Caco-2 (cell line): ENCODE measurements at regions of chr11 and their contacts with region 1.

Region 1: DNA sequence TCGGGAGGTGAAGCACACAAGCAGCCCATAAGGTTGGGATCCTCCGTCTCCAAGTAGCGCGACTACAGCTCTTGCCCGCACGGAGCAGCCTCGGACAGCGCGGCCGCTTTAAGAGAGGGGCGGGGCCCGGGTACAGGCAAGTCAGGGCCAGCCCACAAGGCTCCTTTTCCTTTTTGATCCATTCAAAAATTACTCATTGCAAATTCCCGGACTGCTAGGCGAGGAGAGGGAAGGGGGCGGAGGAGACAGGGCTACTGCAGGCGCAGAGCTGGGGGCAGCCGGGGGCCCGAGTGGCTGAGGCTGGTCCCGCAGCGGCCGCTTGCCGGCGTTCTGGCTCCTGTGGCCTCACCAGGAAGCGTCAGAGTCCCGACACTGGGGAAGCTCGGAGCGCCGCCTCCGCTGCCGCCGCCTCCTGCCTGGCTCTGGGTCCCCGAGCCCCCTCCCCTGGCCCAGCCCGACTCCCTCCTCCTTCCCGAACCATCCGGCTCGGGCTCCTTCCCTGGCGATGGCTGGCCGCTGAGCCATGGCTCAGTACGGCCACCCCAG is at the start of gene UBASH3B:
- DNase-seq: peak; percentile 88
- H3K4me3 ChIP-seq: peak within 1 kb of the TSS; percentile 58
- H3K4me3 Mint-ChIP-seq: peak within 1 kb of the TSS; percentile 95
- H3K27ac Mint-ChIP-seq: peak within 1 kb of the TSS; percentile 65
- H3K4me1 ChIP-seq: peaks cover 13% of the 10 kb centered on the region
- H3K4me1 Mint-ChIP-seq: peaks cover 13% of the 10 kb centered on the region
- H3K27me3 ChIP-seq: no peaks in the 10 kb centered on the region; the same call in 1 of the 2 replicates
- H3K27me3 Mint-ChIP-seq: no peaks in the 10 kb centered on the region
- CTCF ChIP-seq: peak in 1 of 2 experiments; percentile 27
- total RNA-seq, gene UBASH3B: 21.5 and 22.0 TPM in 2 replicates

Region 2: GRCh38 chr11:122572592-122572991 is 83.0 kb before region 1 on chr11:
- CTCF ChIA-PET with region 1: no interaction called
- POLR2A ChIA-PET with region 1: no interaction called
- intact Hi-C with region 1: no loop called
- DNase-seq: no peak
- H3K4me3 ChIP-seq: no peak overlapping the region
- H3K4me3 Mint-ChIP-seq: no peak overlapping the region
- H3K27ac Mint-ChIP-seq: no peak overlapping the region
- H3K4me1 ChIP-seq: no peaks in the 10 kb centered on the region
- H3K4me1 Mint-ChIP-seq: no peaks in the 10 kb centered on the region
- H3K27me3 ChIP-seq: no peaks in the 10 kb centered on the region
- H3K27me3 Mint-ChIP-seq: peaks cover 22% of the 10 kb centered on the region
- CTCF ChIP-seq: no peak

Region 3: GRCh38 chr11:122628810-122629555 is 26.6 kb before region 1 on chr11:
- CTCF ChIA-PET with region 1: interaction called, 26 read pairs
- POLR2A ChIA-PET with region 1: no interaction called
- intact Hi-C with region 1: no loop called
- DNase-seq: peak; percentile 82 to 86
- H3K4me3 ChIP-seq: no peak overlapping the region
- H3K4me3 Mint-ChIP-seq: no peak overlapping the region
- H3K27ac Mint-ChIP-seq: no peak overlapping the region
- H3K4me1 ChIP-seq: no peaks in the 10 kb centered on the region
- H3K4me1 Mint-ChIP-seq: peaks cover 7% of the 10 kb centered on the region
- H3K27me3 ChIP-seq: no peaks in the 10 kb centered on the region
- H3K27me3 Mint-ChIP-seq: peaks cover under 1% of the 10 kb centered on the region
- CTCF ChIP-seq: peak; percentile 92 to 98

Region 4: GRCh38 chr11:122642472-122642922 is 13.1 kb before region 1 on chr11:
- CTCF ChIA-PET with region 1: interaction called, 5 read pairs
- POLR2A ChIA-PET with region 1: no interaction called
- intact Hi-C with region 1: loop called (anchors 1 kb)
- DNase-seq: peak; percentile 66 to 69
- H3K4me3 ChIP-seq: no peak overlapping the region
- H3K4me3 Mint-ChIP-seq: peak overlapping the region; percentile 19
- H3K27ac Mint-ChIP-seq: peak overlapping the region; percentile 69
- H3K4me1 ChIP-seq: peaks cover 20% of the 10 kb centered on the region
- H3K4me1 Mint-ChIP-seq: peaks cover 12% of the 10 kb centered on the region
- H3K27me3 ChIP-seq: no peaks in the 10 kb centered on the region
- H3K27me3 Mint-ChIP-seq: no peaks in the 10 kb centered on the region
- CTCF ChIP-seq: no peak

Region 5: DNA sequence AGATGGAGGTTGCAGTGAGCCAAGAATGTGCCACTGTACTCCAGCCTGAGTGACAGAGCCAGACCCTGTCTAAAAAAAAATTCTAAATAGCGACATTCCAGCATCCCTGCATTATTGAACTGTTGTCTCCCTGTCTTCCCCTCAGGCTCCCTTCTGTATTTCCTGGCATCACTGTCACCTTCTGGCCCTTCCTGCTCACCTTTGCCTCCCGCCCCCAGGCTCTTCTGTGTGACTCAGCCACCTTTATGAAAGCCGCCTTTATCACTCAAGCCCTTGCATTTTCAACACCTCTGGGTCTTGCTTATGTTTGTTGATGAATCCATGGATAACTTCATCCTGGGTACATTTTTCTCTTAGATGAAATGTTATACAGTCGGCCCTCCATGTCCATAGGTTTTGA is 21.0 kb after region 1 on chr11:
- CTCF ChIA-PET with region 1: no interaction called
- POLR2A ChIA-PET with region 1: no interaction called
- intact Hi-C with region 1: loop called (anchors 1 kb)
- DNase-seq: peak; percentile 78 to 89
- H3K4me3 ChIP-seq: no peak overlapping the region
- H3K4me3 Mint-ChIP-seq: no peak overlapping the region
- H3K27ac Mint-ChIP-seq: peak overlapping the region; percentile 17
- H3K4me1 ChIP-seq: peaks cover 24% of the 10 kb centered on the region
- H3K4me1 Mint-ChIP-seq: peaks cover 18% of the 10 kb centered on the region
- H3K27me3 ChIP-seq: no peaks in the 10 kb centered on the region
- H3K27me3 Mint-ChIP-seq: no peaks in the 10 kb centered on the region
- CTCF ChIP-seq: no peak

Region 6: DNA sequence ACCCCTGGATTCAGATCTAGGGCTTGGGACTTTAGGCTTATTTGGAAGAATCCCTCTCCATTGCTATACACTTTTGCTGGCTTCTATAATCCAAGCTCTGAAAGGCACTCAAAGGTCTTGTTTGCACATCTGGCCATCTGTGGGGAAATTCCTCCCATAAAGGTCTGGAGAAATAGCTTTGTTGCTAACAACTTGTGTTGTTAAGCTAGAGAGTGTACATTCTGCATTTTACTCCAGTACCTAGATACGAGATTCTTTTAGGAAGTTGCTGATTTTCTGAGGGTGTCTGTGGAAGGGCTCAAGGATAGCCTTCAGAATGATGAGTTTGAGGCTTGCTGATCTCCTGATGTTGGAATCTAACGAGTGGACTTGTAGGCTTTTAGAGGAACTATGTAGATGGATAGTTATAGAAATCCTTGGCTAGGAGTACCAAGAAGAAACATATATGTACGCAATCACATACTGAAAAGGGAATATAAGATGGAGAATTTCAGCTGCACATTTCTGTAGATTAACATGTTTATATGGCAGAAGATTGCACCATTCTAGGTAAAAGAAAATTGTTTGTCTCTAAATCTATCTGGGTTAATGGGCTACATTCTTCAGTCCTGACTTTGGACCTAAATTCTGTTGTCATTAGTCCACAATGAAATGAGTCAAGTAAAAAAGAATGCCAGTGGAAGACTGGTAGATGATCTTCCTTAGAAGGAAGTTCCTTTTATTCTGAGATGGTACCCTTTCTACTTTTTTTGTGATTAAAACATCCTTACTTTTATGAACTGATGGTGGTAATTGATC is 50.9 kb after region 1 on chr11:
- CTCF ChIA-PET with region 1: interaction called, 5 read pairs
- POLR2A ChIA-PET with region 1: interaction called, 9 read pairs
- intact Hi-C with region 1: loop called (anchors 1 kb)
- DNase-seq: peak; percentile 57 to 73
- H3K4me3 ChIP-seq: no peak overlapping the region
- H3K4me3 Mint-ChIP-seq: peak overlapping the region; percentile 7
- H3K27ac Mint-ChIP-seq: peak overlapping the region; percentile 81
- H3K4me1 ChIP-seq: peaks cover 35% of the 10 kb centered on the region
- H3K4me1 Mint-ChIP-seq: peaks cover 35% of the 10 kb centered on the region
- H3K27me3 ChIP-seq: no peaks in the 10 kb centered on the region
- H3K27me3 Mint-ChIP-seq: no peaks in the 10 kb centered on the region
- CTCF ChIP-seq: no peak

Region 7: GRCh38 chr11:122721964-122722266 is 66.3 kb after region 1 on chr11:
- CTCF ChIA-PET with region 1: no interaction called
- POLR2A ChIA-PET with region 1: no interaction called
- intact Hi-C with region 1: no loop called
- DNase-seq: no peak
- H3K4me3 ChIP-seq: no peak overlapping the region
- H3K4me3 Mint-ChIP-seq: no peak overlapping the region
- H3K27ac Mint-ChIP-seq: no peak overlapping the region
- H3K4me1 ChIP-seq: peaks cover 8% of the 10 kb centered on the region; the same call in 1 of the 2 replicates
- H3K4me1 Mint-ChIP-seq: peaks cover 7% of the 10 kb centered on the region
- H3K27me3 ChIP-seq: no peaks in the 10 kb centered on the region
- H3K27me3 Mint-ChIP-seq: no peaks in the 10 kb centered on the region
- CTCF ChIP-seq: no peak

Region 8: GRCh38 chr11:122733318-122733717 is 77.7 kb after region 1 on chr11:
- CTCF ChIA-PET with region 1: no interaction called
- POLR2A ChIA-PET with region 1: no interaction called
- intact Hi-C with region 1: loop called (anchors 5 kb)
- DNase-seq: no peak
- H3K4me3 ChIP-seq: no peak overlapping the region
- H3K4me3 Mint-ChIP-seq: no peak overlapping the region
- H3K27ac Mint-ChIP-seq: peak overlapping the region; percentile 60
- H3K4me1 ChIP-seq: peaks cover 46% of the 10 kb centered on the region
- H3K4me1 Mint-ChIP-seq: peaks cover 36% of the 10 kb centered on the region
- H3K27me3 ChIP-seq: no peaks in the 10 kb centered on the region
- H3K27me3 Mint-ChIP-seq: no peaks in the 10 kb centered on the region
- CTCF ChIP-seq: no peak

Region 9: DNA sequence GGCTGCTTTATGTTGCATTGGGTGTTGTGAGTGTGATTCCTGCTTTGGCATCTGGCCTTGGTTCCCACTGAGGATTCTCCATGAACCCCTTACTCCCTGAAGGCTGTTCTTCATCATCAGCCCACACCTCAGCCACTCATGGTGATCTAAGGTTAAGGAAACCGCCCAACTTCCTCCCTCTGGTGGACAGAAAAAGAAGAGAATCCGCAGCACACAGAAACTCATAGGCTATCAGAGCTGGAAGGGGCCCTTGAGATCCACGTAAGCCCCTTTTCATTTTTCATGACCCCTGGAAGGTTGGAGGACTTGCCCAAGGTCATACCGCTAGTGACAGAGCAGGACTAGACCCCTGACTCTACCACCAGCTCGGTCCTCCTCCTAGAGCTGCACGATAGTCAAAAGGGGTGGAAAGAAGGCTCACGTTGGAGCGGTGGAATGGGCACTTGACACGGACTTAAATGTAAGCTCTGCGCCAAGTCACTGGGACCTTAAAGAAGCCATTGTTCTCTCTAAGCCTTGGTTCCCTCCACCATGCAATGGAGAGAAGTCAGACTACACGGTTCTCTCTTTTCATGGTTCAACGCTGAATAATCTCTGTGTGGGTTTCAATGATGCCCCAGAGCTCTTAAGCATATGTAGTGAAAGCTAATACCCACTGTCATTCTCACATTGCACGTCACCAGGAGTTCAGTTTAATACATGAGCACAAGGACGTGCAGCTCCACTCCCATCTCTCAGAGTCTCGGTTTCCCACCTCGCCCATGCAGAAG is 99.1 kb after region 1 on chr11:
- CTCF ChIA-PET with region 1: interaction called, 48 read pairs
- POLR2A ChIA-PET with region 1: no interaction called
- intact Hi-C with region 1: loop called (anchors 1 kb)
- DNase-seq: peak in 1 of 2 experiments; percentile 65
- H3K4me3 ChIP-seq: no peak overlapping the region
- H3K4me3 Mint-ChIP-seq: no peak overlapping the region
- H3K27ac Mint-ChIP-seq: no peak overlapping the region
- H3K4me1 ChIP-seq: no peaks in the 10 kb centered on the region
- H3K4me1 Mint-ChIP-seq: no peaks in the 10 kb centered on the region
- H3K27me3 ChIP-seq: no peaks in the 10 kb centered on the region
- H3K27me3 Mint-ChIP-seq: no peaks in the 10 kb centered on the region
- CTCF ChIP-seq: peak; percentile 72 to 86

Region 10: GRCh38 chr11:123011510-123011909 is 355.9 kb after region 1 on chr11:
- CTCF ChIA-PET with region 1: no interaction called
- POLR2A ChIA-PET with region 1: no interaction called
- intact Hi-C with region 1: no loop called
- DNase-seq: peak; percentile 75 to 83
- H3K4me3 ChIP-seq: no peak overlapping the region
- H3K4me3 Mint-ChIP-seq: no peak overlapping the region
- H3K27ac Mint-ChIP-seq: no peak overlapping the region
- H3K4me1 ChIP-seq: peaks cover 18% of the 10 kb centered on the region
- H3K4me1 Mint-ChIP-seq: peaks cover 17% of the 10 kb centered on the region
- H3K27me3 ChIP-seq: no peaks in the 10 kb centered on the region
- H3K27me3 Mint-ChIP-seq: no peaks in the 10 kb centered on the region
- CTCF ChIP-seq: peak in 1 of 2 experiments; percentile 45